ENCODE measurements at regions of chr3 and their contacts with region 1.

Region 1: GRCh38 chr3:17841190-17841828 is 98.9 kb upstream of the TBC1D5 start:
- DNase-seq: peak; percentile 83
- ATAC-seq: peak; percentile 95
- H3K4me3 Mint-ChIP-seq: no peak overlapping the region
- H3K27ac Mint-ChIP-seq: no peak overlapping the region
- H3K4me1 Mint-ChIP-seq: no peaks in the 10 kb centered on the region
- H3K27me3 Mint-ChIP-seq: no peaks in the 10 kb centered on the region
- CTCF ChIP-seq: peak; percentile 91

Region 2: GRCh38 chr3:17258823-17259436 is 582.4 kb before region 1 on chr3:
- CTCF ChIA-PET with region 1: interaction called, 7 read pairs
- POLR2A ChIA-PET with region 1: no interaction called
- intact Hi-C with region 1: loop called (anchors 10 kb)
- DNase-seq: peak; percentile 21
- ATAC-seq: no peak
- H3K4me3 Mint-ChIP-seq: no peak overlapping the region
- H3K27ac Mint-ChIP-seq: no peak overlapping the region
- H3K4me1 Mint-ChIP-seq: no peaks in the 10 kb centered on the region
- H3K27me3 Mint-ChIP-seq: no peaks in the 10 kb centered on the region
- CTCF ChIP-seq: peak; percentile 73

Region 3: GRCh38 chr3:17423786-17424536 is 417.3 kb before region 1 on chr3:
- CTCF ChIA-PET with region 1: interaction called, 26 read pairs
- POLR2A ChIA-PET with region 1: no interaction called
- intact Hi-C with region 1: no loop called
- DNase-seq: no peak
- ATAC-seq: no peak
- H3K4me3 Mint-ChIP-seq: no peak overlapping the region
- H3K27ac Mint-ChIP-seq: no peak overlapping the region
- H3K4me1 Mint-ChIP-seq: no peaks in the 10 kb centered on the region
- H3K27me3 Mint-ChIP-seq: no peaks in the 10 kb centered on the region
- CTCF ChIP-seq: no peak

Region 4: DNA sequence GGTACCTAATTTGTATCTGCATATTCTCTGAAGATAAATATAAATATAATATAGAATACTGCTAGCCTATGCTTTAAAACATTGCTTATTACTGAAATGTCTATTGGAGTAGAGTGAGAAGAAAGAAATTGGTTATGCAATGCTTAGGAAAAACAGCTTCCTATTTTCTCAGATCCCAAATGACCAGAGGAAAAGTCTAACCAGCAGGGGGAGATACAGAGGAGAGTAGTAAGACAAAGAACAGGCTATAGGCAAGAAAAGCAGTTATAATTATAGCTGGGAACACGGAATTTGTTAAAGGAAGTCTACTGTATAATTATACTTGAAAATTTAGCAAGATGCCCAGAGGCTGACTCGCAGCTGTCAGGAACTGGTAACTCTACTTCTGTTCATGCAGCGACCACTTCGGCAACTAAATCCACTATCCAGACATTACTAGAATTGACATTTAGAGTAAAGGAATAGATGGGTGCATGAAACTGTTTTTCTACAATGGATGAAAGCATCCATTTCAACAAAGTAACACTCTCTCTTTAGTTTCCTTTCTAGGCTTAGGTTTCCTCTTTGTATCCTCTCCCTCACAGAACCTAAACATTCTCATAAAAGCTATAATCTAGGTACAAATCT is 196.1 kb before region 1 on chr3:
- CTCF ChIA-PET with region 1: interaction called, 20 read pairs
- POLR2A ChIA-PET with region 1: no interaction called
- intact Hi-C with region 1: loop called (anchors 10 kb)
- DNase-seq: no peak
- ATAC-seq: no peak
- H3K4me3 Mint-ChIP-seq: no peak overlapping the region
- H3K27ac Mint-ChIP-seq: no peak overlapping the region
- H3K4me1 Mint-ChIP-seq: peaks cover 10% of the 10 kb centered on the region
- H3K27me3 Mint-ChIP-seq: no peaks in the 10 kb centered on the region
- CTCF ChIP-seq: peak; percentile 69

Region 5: GRCh38 chr3:17717411-17717810 is 123.9 kb before region 1 on chr3:
- CTCF ChIA-PET with region 1: no interaction called
- POLR2A ChIA-PET with region 1: no interaction called
- intact Hi-C with region 1: no loop called
- DNase-seq: no peak
- ATAC-seq: no peak
- H3K4me3 Mint-ChIP-seq: no peak overlapping the region
- H3K27ac Mint-ChIP-seq: no peak overlapping the region
- H3K4me1 Mint-ChIP-seq: no peaks in the 10 kb centered on the region
- H3K27me3 Mint-ChIP-seq: no peaks in the 10 kb centered on the region
- CTCF ChIP-seq: no peak

Region 6: GRCh38 chr3:17800232-17800631 is 41.1 kb before region 1 on chr3:
- CTCF ChIA-PET with region 1: interaction called, 16 read pairs
- POLR2A ChIA-PET with region 1: no interaction called
- intact Hi-C with region 1: no loop called
- DNase-seq: no peak
- ATAC-seq: no peak
- H3K4me3 Mint-ChIP-seq: no peak overlapping the region
- H3K27ac Mint-ChIP-seq: no peak overlapping the region
- H3K4me1 Mint-ChIP-seq: no peaks in the 10 kb centered on the region
- H3K27me3 Mint-ChIP-seq: peaks cover 2% of the 10 kb centered on the region
- CTCF ChIP-seq: no peak

Region 7: DNA sequence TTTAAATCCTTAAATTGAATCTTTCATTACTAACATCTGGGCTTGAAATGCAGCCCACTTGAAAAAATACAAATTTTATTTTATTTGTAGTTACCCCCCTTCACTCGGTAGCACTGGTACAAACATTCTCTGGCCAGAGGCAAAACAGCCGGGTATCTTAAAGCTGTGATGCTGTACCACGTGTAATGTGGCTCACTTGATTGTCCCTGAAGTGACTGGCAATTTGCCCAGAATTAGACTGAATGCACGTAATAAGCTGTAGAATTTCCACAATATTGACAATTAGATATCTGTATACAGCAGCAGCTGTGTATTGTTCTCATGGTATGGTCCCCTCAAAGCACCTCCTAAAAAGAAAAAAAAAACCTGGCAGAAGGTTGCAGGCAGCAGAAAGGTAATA is 93.9 kb after region 1 on chr3:
- CTCF ChIA-PET with region 1: no interaction called
- POLR2A ChIA-PET with region 1: no interaction called
- intact Hi-C with region 1: no loop called
- DNase-seq: no peak
- ATAC-seq: no peak
- H3K4me3 Mint-ChIP-seq: no peak overlapping the region
- H3K27ac Mint-ChIP-seq: no peak overlapping the region
- H3K4me1 Mint-ChIP-seq: no peaks in the 10 kb centered on the region
- H3K27me3 Mint-ChIP-seq: peaks cover 2% of the 10 kb centered on the region
- CTCF ChIP-seq: no peak